ENCODE measurements at regions of chr1 and their contacts with region 1.

Region 1: GRCh38 chr1:24150234-24151174 is 7.6 kb upstream of the IL22RA1 start:
- DNase-seq: peak; percentile 83
- H3K4me3 ChIP-seq: peak overlapping the region; percentile 16
- H3K27ac ChIP-seq: no peak overlapping the region
- H3K4me1 ChIP-seq: peaks cover 4% of the 10 kb centered on the region
- H3K27me3 ChIP-seq: no peaks in the 10 kb centered on the region
- CTCF ChIP-seq: peak; percentile 93

Region 2: DNA sequence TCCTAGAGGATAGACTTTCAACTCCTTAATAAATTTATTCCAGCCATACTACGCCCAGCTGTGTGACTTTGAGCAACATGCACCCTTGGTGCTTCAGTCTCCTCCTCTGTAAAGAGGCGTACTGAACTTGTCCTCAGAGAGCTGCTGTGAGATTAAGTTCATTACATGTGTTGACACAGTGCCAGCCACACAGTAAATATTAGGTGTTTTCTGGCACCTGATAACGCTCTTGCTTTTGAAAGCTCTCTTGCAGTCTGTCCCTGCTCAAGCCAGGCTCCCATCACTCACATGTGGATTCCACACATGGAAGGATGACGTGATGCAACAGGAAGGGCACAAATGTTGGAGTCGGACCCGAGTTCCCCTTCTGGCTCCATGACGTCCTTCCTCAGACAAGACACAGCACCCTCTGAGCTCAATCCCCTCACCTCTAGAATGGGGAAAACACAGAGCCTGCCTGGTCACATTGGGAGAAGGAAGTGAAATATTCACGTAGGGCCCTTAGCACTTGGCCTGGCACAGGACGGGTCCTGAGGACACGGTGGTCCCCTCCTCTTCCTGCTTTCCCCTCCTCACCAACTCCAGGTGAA is 28.8 kb after region 1 on chr1:
- CTCF ChIA-PET with region 1: interaction called, 10 read pairs
- POLR2A ChIA-PET with region 1: no interaction called
- intact Hi-C with region 1: no loop called
- DNase-seq: no peak
- H3K4me3 ChIP-seq: no peak overlapping the region
- H3K27ac ChIP-seq: no peak overlapping the region
- H3K4me1 ChIP-seq: no peaks in the 10 kb centered on the region
- H3K27me3 ChIP-seq: no peaks in the 10 kb centered on the region
- CTCF ChIP-seq: no peak

Region 3: GRCh38 chr1:24201941-24202440 is 51.5 kb after region 1 on chr1:
- CTCF ChIA-PET with region 1: interaction called, 14 read pairs
- POLR2A ChIA-PET with region 1: interaction called, 6 read pairs
- intact Hi-C with region 1: no loop called
- DNase-seq: peak; percentile 84
- H3K4me3 ChIP-seq: no peak overlapping the region
- H3K27ac ChIP-seq: no peak overlapping the region
- H3K4me1 ChIP-seq: peaks cover 4% of the 10 kb centered on the region
- H3K27me3 ChIP-seq: no peaks in the 10 kb centered on the region
- CTCF ChIP-seq: peak; percentile 90

Region 4: DNA sequence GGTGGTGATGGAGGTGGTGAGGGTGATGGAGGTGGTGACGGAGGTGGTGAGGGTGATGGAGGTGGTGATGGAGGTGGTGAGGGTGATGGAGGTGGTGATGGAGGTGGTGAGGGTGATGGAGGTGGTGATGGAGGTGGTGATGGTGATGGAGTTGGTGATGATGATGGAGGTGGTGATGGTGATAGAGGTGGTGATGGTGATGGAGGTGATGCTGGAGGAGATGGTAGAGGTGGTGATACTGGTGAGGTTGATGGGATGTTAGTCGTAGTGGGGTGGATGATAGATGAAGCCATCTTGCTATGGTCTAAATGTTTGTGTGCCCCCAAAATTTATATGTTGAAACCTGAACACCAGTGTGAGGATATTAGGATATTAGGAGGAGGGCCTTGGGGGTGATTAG is 61.9 kb after region 1 on chr1:
- CTCF ChIA-PET with region 1: no interaction called
- POLR2A ChIA-PET with region 1: no interaction called
- intact Hi-C with region 1: no loop called
- DNase-seq: no peak
- H3K4me3 ChIP-seq: no peak overlapping the region
- H3K27ac ChIP-seq: no peak overlapping the region
- H3K4me1 ChIP-seq: no peaks in the 10 kb centered on the region
- H3K27me3 ChIP-seq: no peaks in the 10 kb centered on the region
- CTCF ChIP-seq: no peak

Region 5: GRCh38 chr1:24391882-24392603 is 241.5 kb after region 1 on chr1:
- CTCF ChIA-PET with region 1: interaction called, 45 read pairs
- POLR2A ChIA-PET with region 1: no interaction called
- intact Hi-C with region 1: loop called (anchors 1 kb)
- DNase-seq: peak; percentile 75
- H3K4me3 ChIP-seq: no peak overlapping the region
- H3K27ac ChIP-seq: no peak overlapping the region
- H3K4me1 ChIP-seq: peaks cover 24% of the 10 kb centered on the region
- H3K27me3 ChIP-seq: no peaks in the 10 kb centered on the region
- CTCF ChIP-seq: peak; percentile 88

Region 6: GRCh38 chr1:24415334-24415909 is 264.9 kb after region 1 on chr1 and contains the start of gene NIPAL3:
- CTCF ChIA-PET with region 1: no interaction called
- POLR2A ChIA-PET with region 1: interaction called, 13 read pairs
- intact Hi-C with region 1: no loop called
- DNase-seq: peak; percentile 99
- H3K4me3 ChIP-seq: peak within 1 kb of the TSS; percentile 61
- H3K27ac ChIP-seq: no peak within 1 kb of the TSS
- H3K4me1 ChIP-seq: peaks cover 29% of the 10 kb centered on the region
- H3K27me3 ChIP-seq: no peaks in the 10 kb centered on the region
- CTCF ChIP-seq: peak; percentile 86
- total RNA-seq, gene NIPAL3: 6.5 and 7.3 TPM in 2 replicates

Region 7: DNA sequence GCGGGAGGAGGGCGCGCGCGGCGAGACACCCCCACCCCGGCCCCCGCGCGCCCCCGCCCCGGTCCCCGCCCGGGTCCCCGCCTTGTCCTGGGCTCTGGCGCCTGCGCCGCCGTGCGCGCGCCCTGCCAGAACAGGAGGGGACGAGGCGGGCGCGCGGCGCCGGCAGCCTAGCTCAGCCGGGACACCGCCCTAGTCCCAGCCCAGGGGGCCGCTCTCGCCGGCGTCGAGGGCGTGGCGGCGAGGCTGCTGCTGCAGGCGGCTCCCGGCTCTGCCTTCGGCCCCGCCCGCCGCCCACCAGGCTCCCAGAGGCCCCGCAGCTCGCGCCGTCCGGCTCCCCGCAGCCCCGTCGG is 352.2 kb after region 1 on chr1 and contains the start of gene RCAN3:
- CTCF ChIA-PET with region 1: no interaction called
- POLR2A ChIA-PET with region 1: no interaction called
- intact Hi-C with region 1: no loop called
- DNase-seq: peak; percentile 95
- H3K4me3 ChIP-seq: peak within 1 kb of the TSS; percentile 64
- H3K27ac ChIP-seq: peak within 1 kb of the TSS; percentile 52
- H3K4me1 ChIP-seq: no peaks in the 10 kb centered on the region
- H3K27me3 ChIP-seq: no peaks in the 10 kb centered on the region
- CTCF ChIP-seq: no peak
- total RNA-seq, gene RCAN3: 7.4 and 9.1 TPM in 2 replicates

Region 8: GRCh38 chr1:24659993-24660665 is 509.6 kb after region 1 on chr1:
- CTCF ChIA-PET with region 1: interaction called, 10 read pairs
- POLR2A ChIA-PET with region 1: no interaction called
- intact Hi-C with region 1: no loop called
- DNase-seq: no peak
- H3K4me3 ChIP-seq: no peak overlapping the region
- H3K27ac ChIP-seq: no peak overlapping the region
- H3K4me1 ChIP-seq: no peaks in the 10 kb centered on the region
- H3K27me3 ChIP-seq: no peaks in the 10 kb centered on the region
- CTCF ChIP-seq: no peak

Measured in A673 (cell line).